ENCODE measurements at regions of chr6 and their contacts with region 1.

Region 1: GRCh38 chr6:132780770-132781371 is 17.6 kb downstream of the SLC18B1 start:
- DNase-seq: no peak
- H3K4me3 ChIP-seq: no peak overlapping the region
- H3K27ac ChIP-seq: no peak overlapping the region
- H3K4me1 ChIP-seq: no peaks in the 10 kb centered on the region
- H3K27me3 ChIP-seq: no peaks in the 10 kb centered on the region
- CTCF ChIP-seq: peak in 2 of 3 experiments; percentile 32 to 45

Region 2: DNA sequence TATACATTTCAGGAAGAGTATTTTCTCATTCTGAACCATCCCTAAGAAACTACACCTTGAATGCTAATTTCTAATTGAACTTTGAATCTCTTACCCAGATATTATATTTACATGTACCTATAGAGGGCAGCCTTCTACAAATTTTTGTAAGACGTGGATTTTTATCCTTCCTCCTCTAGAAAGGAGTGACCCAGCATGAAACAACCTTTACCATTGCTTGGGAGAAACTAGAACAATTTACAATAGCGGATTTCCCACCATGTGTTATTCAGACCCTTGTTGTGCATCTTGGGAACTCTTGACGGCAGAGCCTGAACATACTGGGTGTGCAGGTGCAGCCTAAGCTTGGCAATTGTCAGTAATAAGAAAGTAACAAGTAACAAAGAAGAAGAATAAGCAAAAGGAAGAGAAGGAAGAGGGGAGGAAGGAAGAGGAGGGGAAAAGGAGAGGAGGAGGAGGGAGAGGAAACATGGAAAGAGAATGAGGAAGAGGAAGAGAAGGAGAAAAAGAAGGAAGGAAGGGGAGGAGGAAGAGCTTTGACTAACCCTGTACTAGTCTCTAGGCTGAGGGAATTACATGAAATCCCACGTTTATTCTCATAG is 111.1 kb before region 1 on chr6:
- intact Hi-C with region 1: loop called (anchors 5 kb)
- DNase-seq: no peak
- H3K4me3 ChIP-seq: no peak overlapping the region
- H3K27ac ChIP-seq: no peak overlapping the region
- H3K4me1 ChIP-seq: no peaks in the 10 kb centered on the region
- H3K27me3 ChIP-seq: no peaks in the 10 kb centered on the region
- CTCF ChIP-seq: peak; percentile 42 to 60 (median 54)

Region 3: DNA sequence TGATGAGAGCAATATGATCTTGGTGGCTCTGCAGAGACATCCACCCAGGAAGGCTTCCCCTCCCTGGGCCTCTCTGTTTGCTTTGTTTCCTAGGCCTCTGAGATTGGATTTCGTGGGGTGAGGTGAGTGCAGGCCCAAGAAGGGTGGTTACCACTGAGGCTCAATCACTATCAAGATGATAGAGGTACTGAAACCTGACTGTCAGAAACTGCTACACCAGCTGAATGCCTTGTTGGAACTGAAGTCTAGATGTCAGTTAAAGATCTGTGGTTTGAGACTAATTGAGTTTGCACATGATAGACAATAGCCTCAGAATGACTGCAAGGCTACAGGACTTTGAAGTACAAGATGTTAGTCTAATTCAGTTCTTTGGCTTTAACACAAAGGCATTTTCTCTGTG is 82.3 kb before region 1 on chr6:
- intact Hi-C with region 1: no loop called
- DNase-seq: no peak
- H3K4me3 ChIP-seq: no peak overlapping the region
- H3K27ac ChIP-seq: no peak overlapping the region
- H3K4me1 ChIP-seq: no peaks in the 10 kb centered on the region
- H3K27me3 ChIP-seq: no peaks in the 10 kb centered on the region
- CTCF ChIP-seq: no peak

Region 4: DNA sequence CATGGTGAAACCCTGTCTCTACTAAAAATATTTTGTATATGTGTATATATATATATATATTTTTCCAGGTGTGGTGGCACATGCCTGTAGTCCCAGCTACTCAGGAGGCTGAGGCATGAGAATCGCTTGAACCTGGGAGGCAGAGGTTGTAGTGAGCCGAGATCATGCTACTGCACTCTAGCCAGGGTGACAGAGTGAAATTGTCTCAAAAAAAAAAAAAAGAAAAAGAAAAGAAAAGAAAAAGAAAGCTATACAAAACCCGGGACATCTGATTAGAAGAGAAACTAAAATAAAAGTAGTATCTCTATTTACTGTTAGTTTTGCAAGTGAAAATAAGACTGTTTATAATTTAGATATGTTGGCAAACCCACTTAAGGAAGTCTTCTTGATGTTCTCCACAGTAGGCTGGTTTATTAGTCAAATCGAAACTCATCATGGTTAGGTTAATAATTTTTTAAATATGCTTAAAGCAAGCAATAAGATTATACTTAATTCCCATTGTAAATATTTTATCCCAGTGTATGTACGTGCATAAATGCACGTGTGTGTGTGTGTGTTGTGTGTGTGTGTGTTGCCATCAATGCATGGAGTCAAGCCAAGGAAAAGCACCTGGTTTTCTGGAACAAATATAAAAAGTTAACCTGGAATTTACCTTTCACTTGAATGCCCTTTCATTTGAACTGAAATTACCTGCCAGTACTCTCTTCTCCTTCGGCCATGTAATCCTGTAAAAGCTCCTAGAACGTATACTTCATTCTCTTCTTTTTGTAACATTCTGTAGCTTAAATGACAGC is 30.2 kb before region 1 on chr6:
- intact Hi-C with region 1: no loop called
- DNase-seq: no peak
- H3K4me3 ChIP-seq: no peak overlapping the region
- H3K27ac ChIP-seq: no peak overlapping the region
- H3K4me1 ChIP-seq: no peaks in the 10 kb centered on the region
- H3K27me3 ChIP-seq: no peaks in the 10 kb centered on the region
- CTCF ChIP-seq: no peak

Region 5: DNA sequence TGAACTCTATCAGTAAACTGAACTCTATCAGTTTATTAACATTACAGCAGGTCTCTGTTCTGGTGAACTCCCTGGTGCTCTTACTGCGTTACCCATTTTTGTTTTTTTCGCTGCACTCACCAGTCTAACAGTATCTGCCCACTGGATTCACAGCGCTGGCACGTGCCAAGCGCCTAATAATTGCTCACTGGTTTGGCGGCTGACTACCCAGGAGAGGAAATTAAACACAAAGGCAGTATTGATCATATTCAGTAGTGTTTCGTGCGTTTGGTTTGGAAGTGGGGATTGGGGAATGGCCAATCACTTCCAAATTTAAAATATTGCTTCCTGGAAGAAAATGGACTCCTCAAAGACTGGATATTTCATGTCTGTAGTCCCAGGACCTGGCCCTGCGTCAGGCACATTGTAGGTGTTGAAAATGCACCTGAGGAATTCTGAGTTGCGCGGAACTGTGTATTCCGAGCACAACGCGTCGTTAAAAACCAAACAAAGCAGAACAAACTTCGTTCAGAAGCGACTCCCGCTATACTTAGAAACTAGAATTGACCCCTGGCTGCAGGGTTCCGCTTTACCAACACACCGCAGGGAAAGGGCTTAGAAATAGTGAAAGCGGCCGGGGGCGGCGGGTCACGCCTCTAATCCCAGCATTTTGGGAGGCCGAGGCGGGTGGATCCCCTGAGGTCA is 32.4 kb after region 1 on chr6:
- intact Hi-C with region 1: no loop called
- DNase-seq: peak in 1 of 2 donors; percentile 74
- H3K4me3 ChIP-seq: peak overlapping the region; percentile 60 to 76
- H3K27ac ChIP-seq: peak overlapping the region; percentile 54 to 56
- H3K4me1 ChIP-seq: peaks cover 10 to 20% of the 10 kb centered on the region in 2 donors
- H3K27me3 ChIP-seq: no peaks in the 10 kb centered on the region
- CTCF ChIP-seq: no peak

Region 6: GRCh38 chr6:132907914-132908313 is 127.0 kb after region 1 on chr6:
- intact Hi-C with region 1: no loop called
- DNase-seq: no peak
- H3K4me3 ChIP-seq: no peak overlapping the region
- H3K27ac ChIP-seq: no peak overlapping the region
- H3K4me1 ChIP-seq: no peaks in the 10 kb centered on the region
- H3K27me3 ChIP-seq: no peaks in the 10 kb centered on the region
- CTCF ChIP-seq: no peak